ENCODE measurements at regions of chr9 and their contacts with region 1.

Region 1: GRCh38 chr9:114372921-114373448 is 14.8 kb downstream of the AKNA start:
- DNase-seq: peak; percentile 64 to 97 (median 82)
- ATAC-seq: peak; percentile 89
- H3K4me3 ChIP-seq: peak overlapping the region; percentile 39
- H3K4me3 Mint-ChIP-seq: peak overlapping the region; percentile 85
- H3K27ac ChIP-seq: peak overlapping the region; percentile 70 to 86
- H3K27ac Mint-ChIP-seq: peak overlapping the region; percentile 81
- H3K4me1 ChIP-seq: peaks cover 98% of the 10 kb centered on the region
- H3K4me1 Mint-ChIP-seq: peaks cover 87% of the 10 kb centered on the region
- H3K27me3 ChIP-seq: no peaks in the 10 kb centered on the region
- H3K27me3 Mint-ChIP-seq: no peaks in the 10 kb centered on the region
- CTCF ChIP-seq: no peak

Region 2: DNA sequence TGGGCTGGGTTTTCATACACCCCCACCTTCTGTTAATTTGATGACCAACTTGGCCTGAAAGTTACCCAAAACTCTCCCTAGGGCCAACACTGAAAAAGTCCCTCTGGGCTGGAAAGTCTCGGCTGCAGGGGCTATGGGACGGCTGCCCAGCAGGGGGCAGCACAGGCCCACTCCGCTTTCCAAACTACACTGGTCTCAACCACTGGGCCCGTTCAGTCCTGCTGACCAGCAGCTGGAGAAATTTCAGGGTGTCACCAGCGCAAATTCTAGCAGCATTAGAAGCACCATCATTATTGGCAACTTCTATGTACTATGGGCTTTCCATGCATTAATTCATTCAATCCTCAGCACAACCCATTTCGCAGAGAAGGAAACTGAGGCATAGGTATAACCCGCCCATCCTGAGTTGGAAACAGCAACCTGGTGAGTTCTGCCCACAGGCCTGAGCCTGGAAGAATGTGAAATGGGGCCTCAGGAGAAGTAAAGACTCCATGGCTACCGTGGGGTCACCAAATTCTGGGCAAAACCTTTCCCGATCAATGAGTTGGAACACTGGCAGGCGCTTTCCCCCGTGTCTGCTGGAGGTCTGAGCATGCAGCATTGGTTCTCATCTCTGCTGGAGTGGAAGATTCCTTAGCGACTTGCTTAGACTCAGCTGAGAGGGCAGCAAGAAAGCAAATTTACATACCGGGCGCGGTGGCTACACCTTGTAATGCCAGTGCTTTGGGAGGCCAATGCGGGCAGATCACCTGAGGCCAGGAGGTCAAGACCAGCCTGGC is 33.7 kb before region 1 on chr9:
- CTCF ChIA-PET with region 1: interaction called, 4 read pairs
- POLR2A ChIA-PET with region 1: interaction called, 17 read pairs
- intact Hi-C with region 1: no loop called
- DNase-seq: peak; percentile 23 to 75 (median 44)
- ATAC-seq: peak; percentile 67
- H3K4me3 ChIP-seq: no peak overlapping the region
- H3K4me3 Mint-ChIP-seq: no peak overlapping the region
- H3K27ac ChIP-seq: peak overlapping the region in 1 of 2 donors; percentile 40
- H3K27ac Mint-ChIP-seq: peak overlapping the region; percentile 62
- H3K4me1 ChIP-seq: peaks cover 11% of the 10 kb centered on the region
- H3K4me1 Mint-ChIP-seq: peaks cover 16% of the 10 kb centered on the region
- H3K27me3 ChIP-seq: no peaks in the 10 kb centered on the region
- H3K27me3 Mint-ChIP-seq: no peaks in the 10 kb centered on the region
- CTCF ChIP-seq: peak; percentile 89

Region 3: DNA sequence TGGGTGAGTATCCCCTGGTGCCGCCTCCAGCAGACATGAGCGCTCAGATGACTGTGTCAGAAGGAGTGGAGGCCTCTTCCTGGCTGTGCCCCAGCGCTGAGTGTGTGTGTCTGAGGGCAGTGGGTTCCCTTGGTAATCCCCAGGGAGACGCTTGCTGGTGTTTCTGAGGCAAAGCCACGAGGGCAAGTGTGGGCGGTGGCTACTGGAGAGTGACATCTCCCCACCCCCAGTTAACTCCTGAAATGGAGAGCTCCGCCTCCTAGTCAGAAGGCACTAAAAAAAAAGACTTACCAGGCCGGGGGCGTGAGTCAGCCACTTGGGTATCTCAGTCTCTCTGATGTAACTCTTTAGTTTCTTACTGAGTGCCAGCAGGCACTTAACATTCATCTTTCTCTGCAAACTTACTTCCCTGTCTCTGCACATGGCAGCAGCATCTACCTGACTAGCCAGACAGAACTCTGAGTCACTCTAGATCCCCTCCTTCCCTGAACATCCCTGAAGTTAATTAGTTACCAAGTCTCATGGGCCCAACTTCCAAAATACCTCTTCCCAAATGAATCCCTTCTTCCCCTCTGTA is 24.0 kb before region 1 on chr9:
- CTCF ChIA-PET with region 1: no interaction called
- POLR2A ChIA-PET with region 1: interaction called, 17 read pairs
- intact Hi-C with region 1: loop called in 1 of 2 experiments (anchors 2 kb)
- DNase-seq: peak in 11 of 14 experiments; percentile 27 to 83 (median 58)
- ATAC-seq: peak; percentile 85
- H3K4me3 ChIP-seq: no peak overlapping the region
- H3K4me3 Mint-ChIP-seq: peak overlapping the region; percentile 36
- H3K27ac ChIP-seq: peak overlapping the region; percentile 61 to 66
- H3K27ac Mint-ChIP-seq: peak overlapping the region; percentile 92
- H3K4me1 ChIP-seq: peaks cover 40% of the 10 kb centered on the region
- H3K4me1 Mint-ChIP-seq: peaks cover 59% of the 10 kb centered on the region
- H3K27me3 ChIP-seq: no peaks in the 10 kb centered on the region
- H3K27me3 Mint-ChIP-seq: no peaks in the 10 kb centered on the region
- CTCF ChIP-seq: no peak

Region 4: GRCh38 chr9:114397848-114398605 is 25.0 kb after region 1 on chr9:
- CTCF ChIA-PET with region 1: interaction called, 5 read pairs
- POLR2A ChIA-PET with region 1: interaction called, 45 read pairs
- intact Hi-C with region 1: loop called (anchors 1 to 2 kb)
- DNase-seq: peak; percentile 90 to 98 (median 96)
- ATAC-seq: peak; percentile 84
- H3K4me3 ChIP-seq: peak overlapping the region; percentile 99
- H3K4me3 Mint-ChIP-seq: peak overlapping the region; percentile 97
- H3K27ac ChIP-seq: peak overlapping the region; percentile 93 to 94
- H3K27ac Mint-ChIP-seq: peak overlapping the region; percentile 98
- H3K4me1 ChIP-seq: peaks cover 53% of the 10 kb centered on the region
- H3K4me1 Mint-ChIP-seq: peaks cover 45% of the 10 kb centered on the region
- H3K27me3 ChIP-seq: no peaks in the 10 kb centered on the region
- H3K27me3 Mint-ChIP-seq: no peaks in the 10 kb centered on the region
- CTCF ChIP-seq: no peak

Region 5: GRCh38 chr9:114722081-114722621 is 349.2 kb after region 1 on chr9:
- CTCF ChIA-PET with region 1: no interaction called
- POLR2A ChIA-PET with region 1: no interaction called
- intact Hi-C with region 1: no loop called
- DNase-seq: no peak
- ATAC-seq: no peak
- H3K4me3 ChIP-seq: no peak overlapping the region
- H3K4me3 Mint-ChIP-seq: no peak overlapping the region
- H3K27ac ChIP-seq: no peak overlapping the region
- H3K27ac Mint-ChIP-seq: no peak overlapping the region
- H3K4me1 ChIP-seq: peaks cover 34% of the 10 kb centered on the region
- H3K4me1 Mint-ChIP-seq: peaks cover 33% of the 10 kb centered on the region
- H3K27me3 ChIP-seq: no peaks in the 10 kb centered on the region
- H3K27me3 Mint-ChIP-seq: no peaks in the 10 kb centered on the region
- CTCF ChIP-seq: no peak

Measured in CD4-positive, alpha-beta T cell (primary cell).